ENCODE measurements at regions of chr20 and their contacts with region 1.

Region 1: GRCh38 chr20:37808233-37809070 is 94.5 kb upstream of the VSTM2L start:
- DNase-seq: no peak
- ATAC-seq: no peak
- H3K4me3 Mint-ChIP-seq: no peak overlapping the region
- H3K27ac Mint-ChIP-seq: no peak overlapping the region
- H3K4me1 Mint-ChIP-seq: peaks cover 12% of the 10 kb centered on the region
- H3K27me3 Mint-ChIP-seq: peaks cover 3% of the 10 kb centered on the region; the same call in 1 of the 2 replicates
- CTCF ChIP-seq: no peak

Region 2: GRCh38 chr20:37640600-37641561 is 167.6 kb before region 1 on chr20:
- CTCF ChIA-PET with region 1: no interaction called
- POLR2A ChIA-PET with region 1: no interaction called
- DNase-seq: no peak
- ATAC-seq: no peak
- H3K4me3 Mint-ChIP-seq: no peak overlapping the region
- H3K27ac Mint-ChIP-seq: no peak overlapping the region
- H3K4me1 Mint-ChIP-seq: no peaks in the 10 kb centered on the region
- H3K27me3 Mint-ChIP-seq: peaks cover 3% of the 10 kb centered on the region; the same call in 1 of the 2 replicates
- CTCF ChIP-seq: no peak

Region 3: DNA sequence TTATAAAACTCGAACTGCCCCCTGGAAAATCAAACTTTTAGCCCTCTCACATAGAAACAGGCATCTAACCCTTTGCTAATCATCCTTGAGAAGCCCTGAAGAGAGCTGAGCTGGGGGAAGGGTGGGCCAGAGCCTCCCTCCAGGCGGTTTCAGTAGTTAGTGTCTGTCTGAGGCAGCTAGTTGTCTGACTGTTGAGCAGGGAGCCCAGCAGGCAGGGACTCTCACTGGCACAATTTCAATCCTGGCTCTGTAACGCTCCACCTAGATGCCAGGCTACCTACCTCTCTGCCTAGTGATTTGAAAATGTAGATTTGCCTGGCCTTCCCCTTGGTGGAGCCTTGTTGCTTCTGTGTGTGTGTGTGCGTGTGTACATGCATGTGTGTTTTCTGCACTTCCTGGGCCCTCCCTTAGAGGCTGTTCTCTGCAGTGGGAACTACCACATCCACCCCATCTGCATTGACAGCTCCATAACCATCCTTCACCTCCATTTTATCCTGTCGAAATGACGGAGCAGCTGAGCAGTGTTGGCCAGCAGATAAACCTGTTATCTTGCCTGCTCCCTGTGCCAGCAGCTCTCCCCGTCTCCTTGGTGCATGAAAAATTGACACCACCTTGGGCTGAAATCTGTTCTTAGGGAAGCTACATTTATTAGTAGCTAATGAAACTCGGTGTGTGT is 24.9 kb after region 1 on chr20:
- CTCF ChIA-PET with region 1: no interaction called
- POLR2A ChIA-PET with region 1: no interaction called
- DNase-seq: no peak
- ATAC-seq: peak; percentile 20; the same call in 1 of the 2 replicates
- H3K4me3 Mint-ChIP-seq: no peak overlapping the region
- H3K27ac Mint-ChIP-seq: no peak overlapping the region
- H3K4me1 Mint-ChIP-seq: peaks cover 5% of the 10 kb centered on the region
- H3K27me3 Mint-ChIP-seq: no peaks in the 10 kb centered on the region
- CTCF ChIP-seq: no peak

Region 4: DNA sequence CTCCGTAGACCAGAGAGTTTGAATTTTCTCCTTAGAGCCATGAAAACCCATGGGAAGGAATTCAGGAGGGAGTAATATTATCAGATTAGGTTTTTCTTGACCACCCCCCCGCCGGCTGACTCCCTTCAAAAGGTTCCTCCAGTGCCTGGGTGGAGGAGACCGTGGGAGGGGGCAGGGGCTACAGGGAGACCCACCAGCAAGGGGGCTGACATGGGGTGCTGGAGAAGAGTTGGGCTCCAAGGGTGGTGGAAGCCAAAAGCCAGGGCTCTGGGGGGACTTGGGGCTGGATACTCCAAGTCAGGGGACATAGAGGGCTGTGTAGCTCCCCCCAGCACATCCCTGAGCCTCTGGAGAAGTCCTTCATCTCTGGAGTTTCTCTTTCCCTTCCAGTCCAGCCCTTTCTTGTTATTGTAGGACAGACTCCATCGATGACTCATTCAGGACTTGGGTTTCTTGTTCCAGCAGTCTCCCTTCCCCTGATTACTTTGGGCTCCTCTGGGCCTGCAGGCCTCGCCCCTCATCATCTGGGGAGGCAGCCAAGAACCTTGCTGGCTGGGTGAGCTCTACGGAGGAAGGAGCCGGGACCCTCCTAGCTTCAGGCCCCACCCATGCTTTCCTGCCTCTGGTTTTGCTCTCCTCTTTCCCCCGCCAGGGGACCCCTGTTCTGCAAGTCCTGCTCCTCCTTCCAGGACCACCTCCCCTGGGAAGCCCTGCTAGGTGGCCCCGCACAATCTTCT is 462.6 kb after region 1 on chr20:
- CTCF ChIA-PET with region 1: no interaction called
- POLR2A ChIA-PET with region 1: interaction called, 10 read pairs
- DNase-seq: no peak
- ATAC-seq: no peak
- H3K4me3 Mint-ChIP-seq: no peak overlapping the region
- H3K27ac Mint-ChIP-seq: no peak overlapping the region
- H3K4me1 Mint-ChIP-seq: peaks cover 2% of the 10 kb centered on the region; the same call in 1 of the 2 replicates
- H3K27me3 Mint-ChIP-seq: peaks cover 2% of the 10 kb centered on the region
- CTCF ChIP-seq: no peak

Region 5: DNA sequence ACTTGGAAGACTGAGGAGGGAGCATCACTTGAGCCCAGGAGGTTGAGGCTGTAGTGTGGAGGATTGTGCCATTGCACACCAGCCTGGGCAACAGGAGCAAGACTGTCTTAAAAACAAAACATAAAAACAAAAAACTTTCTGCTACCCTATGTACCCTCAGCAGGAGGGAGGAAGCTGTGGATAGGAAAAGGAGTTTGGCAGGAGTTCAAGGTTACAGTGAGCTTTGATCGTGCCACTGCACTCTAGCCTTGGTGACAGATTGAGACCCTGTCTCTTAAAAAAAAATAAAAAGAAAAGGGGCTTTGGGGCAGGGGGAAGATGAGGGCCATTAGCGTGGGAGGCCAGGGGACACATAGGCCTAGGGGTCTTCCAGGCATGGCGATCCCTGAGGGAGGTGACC is 1289.4 kb after region 1 on chr20:
- CTCF ChIA-PET with region 1: no interaction called
- POLR2A ChIA-PET with region 1: no interaction called
- DNase-seq: no peak
- ATAC-seq: no peak
- H3K4me3 Mint-ChIP-seq: no peak overlapping the region
- H3K27ac Mint-ChIP-seq: no peak overlapping the region
- H3K4me1 Mint-ChIP-seq: no peaks in the 10 kb centered on the region
- H3K27me3 Mint-ChIP-seq: peaks cover 6% of the 10 kb centered on the region
- CTCF ChIP-seq: no peak